ENCODE measurements at regions of chr3 and their contacts with region 1.

Region 1: GRCh38 chr3:139319428-139320402 is 24.1 kb upstream of the MRPS22 start:
- ATAC-seq: peak in 2 of 8 experiments; percentile 21 to 32
- H3K4me3 ChIP-seq: no peak overlapping the region
- H3K27ac ChIP-seq: no peak overlapping the region
- H3K4me1 ChIP-seq: no peaks in the 10 kb centered on the region

Region 2: GRCh38 chr3:139020868-139021234 is 298.9 kb before region 1 on chr3 and contains the start of gene PRR23B:
- in situ Hi-C with region 1: no loop called
- ATAC-seq: no peak
- H3K4me3 ChIP-seq: no peak within 1 kb of the TSS
- H3K27ac ChIP-seq: no peak within 1 kb of the TSS
- H3K4me1 ChIP-seq: no peaks in the 10 kb centered on the region
- total RNA-seq, gene PRR23B: 0.14 to 0.71 (median 0.20) TPM in 3 of 8 experiments, not detected in the others

Region 3: GRCh38 chr3:139111392-139112229 is 208.1 kb before region 1 on chr3:
- in situ Hi-C with region 1: loop called in 5 of 9 experiments (anchors 10 to 25 kb)
- ATAC-seq: peak; percentile 87 to 98 (median 92)
- H3K4me3 ChIP-seq: no peak overlapping the region
- H3K27ac ChIP-seq: no peak overlapping the region
- H3K4me1 ChIP-seq: no peaks in the 10 kb centered on the region

Measured in motor neuron (in vitro differentiated cells).